A549 (cell line): ENCODE measurements at regions of chr17 and their contacts with region 1.

Region 1: GRCh38 chr17:78360371-78361224 is 721 bp upstream of the SOCS3 start:
- DNase-seq: peak; percentile 92 to 99
- ATAC-seq: peak; percentile 54 to 81
- H3K4me3 ChIP-seq: peak overlapping the region; percentile 86
- H3K27ac ChIP-seq: peak overlapping the region; percentile 93 to 96
- H3K4me1 ChIP-seq: peaks cover 35% of the 10 kb centered on the region
- CTCF ChIP-seq: peak; percentile 96
- EP300 ChIP-seq: peak in 1 of 2 experiments; percentile 3; a peak in 1 of 5 replicates
- POLR2A ChIP-seq: no peak
- RAD21 ChIP-seq: peak; percentile 90 to 96

Region 2: DNA sequence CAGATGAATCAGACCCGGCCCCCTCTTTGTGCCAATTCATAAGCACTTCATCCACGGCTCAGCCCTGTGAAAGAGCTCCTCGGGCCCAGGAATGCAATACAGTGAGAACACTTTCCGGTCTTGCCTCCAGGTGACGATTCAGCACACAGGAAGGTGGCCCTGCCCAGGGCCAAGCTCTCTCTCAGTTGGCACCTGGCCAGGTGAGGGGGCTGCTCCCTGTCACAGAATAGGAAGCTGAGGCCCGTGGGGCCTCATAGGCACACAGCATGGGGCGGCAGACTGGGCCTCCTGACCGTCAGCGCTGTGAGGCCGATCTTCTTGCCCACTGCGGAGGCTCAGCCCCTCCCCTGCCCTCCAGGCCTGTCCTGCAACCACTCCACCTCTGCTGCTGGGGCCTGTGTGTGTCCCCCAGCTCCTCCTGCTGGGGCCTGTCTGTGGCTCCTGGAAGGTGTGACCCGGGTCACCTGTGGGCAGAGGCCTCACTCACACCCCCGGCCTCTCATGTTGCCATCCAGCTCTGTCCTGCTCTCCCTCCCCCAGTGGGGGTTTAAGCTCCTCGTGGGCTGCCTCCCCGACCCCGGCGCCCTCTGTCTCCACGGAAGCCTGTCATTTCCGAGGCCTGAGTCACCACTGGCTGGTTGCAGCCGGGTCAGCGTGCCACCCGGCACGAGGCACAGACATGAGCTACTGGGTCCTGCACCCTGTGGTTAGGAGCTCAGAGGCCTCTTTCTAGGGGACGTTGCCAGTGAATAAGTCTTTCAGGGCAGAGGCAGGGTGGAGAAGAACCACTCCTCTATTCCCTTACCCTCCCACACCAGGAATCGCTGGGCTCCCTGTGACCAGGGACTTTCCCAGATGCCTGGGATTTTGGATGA is 1105.4 kb before region 1 on chr17:
- CTCF ChIA-PET with region 1: no interaction called
- POLR2A ChIA-PET with region 1: no interaction called
- DNase-seq: peak; percentile 87 to 93
- ATAC-seq: peak; percentile 82 to 86
- H3K4me3 ChIP-seq: no peak overlapping the region
- H3K27ac ChIP-seq: peak overlapping the region; percentile 80 to 88
- H3K4me1 ChIP-seq: peaks cover 36% of the 10 kb centered on the region
- CTCF ChIP-seq: no peak; the same call in 2 of the 3 replicates
- EP300 ChIP-seq: peak in 1 of 2 experiments; percentile 52; a peak in 1 of 5 replicates
- POLR2A ChIP-seq: no peak
- RAD21 ChIP-seq: peak in 1 of 2 experiments; percentile 34; a peak in 4 of 5 replicates

Region 3: GRCh38 chr17:78239489-78239931 is 121.1 kb before region 1 on chr17:
- CTCF ChIA-PET with region 1: no interaction called
- POLR2A ChIA-PET with region 1: no interaction called
- DNase-seq: no peak
- ATAC-seq: no peak
- H3K4me3 ChIP-seq: no peak overlapping the region
- H3K27ac ChIP-seq: no peak overlapping the region
- H3K4me1 ChIP-seq: no peaks in the 10 kb centered on the region
- CTCF ChIP-seq: no peak
- EP300 ChIP-seq: no peak
- POLR2A ChIP-seq: no peak
- RAD21 ChIP-seq: no peak

Region 4: DNA sequence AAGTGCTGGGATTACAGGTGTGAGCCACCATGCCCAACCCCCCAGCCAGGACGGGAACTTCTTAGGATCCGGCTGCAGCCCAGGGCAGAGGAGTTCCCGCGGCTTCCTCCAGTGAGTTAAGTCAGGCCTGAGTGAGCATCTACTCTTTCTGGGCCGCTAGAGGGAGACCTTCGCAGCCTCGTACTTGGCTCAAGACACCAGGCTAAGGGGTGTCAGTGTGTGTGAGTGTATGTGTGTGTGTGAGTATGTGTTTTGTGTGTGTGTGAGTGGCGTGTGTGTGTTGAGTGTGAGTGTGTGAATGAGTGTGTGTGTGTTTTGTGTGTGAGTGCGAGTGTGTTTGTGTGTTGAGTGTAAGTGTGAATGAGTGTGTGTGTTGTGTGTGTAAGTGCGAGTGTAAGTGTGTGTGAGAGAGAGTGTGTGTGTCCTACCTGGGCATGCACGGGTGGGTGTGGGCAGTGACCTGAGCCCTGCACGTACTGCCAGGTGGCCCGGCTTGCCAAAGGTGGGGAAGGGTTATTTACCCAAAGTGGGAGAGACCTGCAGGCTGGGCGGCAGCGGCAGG is 70.7 kb before region 1 on chr17:
- CTCF ChIA-PET with region 1: interaction called, 119 read pairs
- POLR2A ChIA-PET with region 1: interaction called, 5 read pairs
- DNase-seq: peak; percentile 85 to 94
- ATAC-seq: peak; percentile 96 to 98
- H3K4me3 ChIP-seq: no peak overlapping the region
- H3K27ac ChIP-seq: peak overlapping the region in 1 of 2 experiments; percentile 59; a peak in 2 of 6 replicates
- H3K4me1 ChIP-seq: peaks cover 4% of the 10 kb centered on the region; the same call in 2 of the 3 replicates
- CTCF ChIP-seq: peak; percentile 85
- EP300 ChIP-seq: no peak
- POLR2A ChIP-seq: no peak
- RAD21 ChIP-seq: peak; percentile 90 to 96

Region 5: GRCh38 chr17:78313735-78314648 is 46.6 kb before region 1 on chr17:
- CTCF ChIA-PET with region 1: interaction called, 132 read pairs
- POLR2A ChIA-PET with region 1: interaction called, 26 read pairs
- DNase-seq: peak; percentile 95 to 98
- ATAC-seq: peak; percentile 63 to 72
- H3K4me3 ChIP-seq: peak overlapping the region; percentile 42
- H3K27ac ChIP-seq: peak overlapping the region; percentile 94 to 95
- H3K4me1 ChIP-seq: peaks cover 57% of the 10 kb centered on the region
- CTCF ChIP-seq: no peak; the same call in 2 of the 3 replicates
- EP300 ChIP-seq: peak; percentile 31 to 57; a peak in 2 of 5 replicates
- POLR2A ChIP-seq: peak; percentile 64
- RAD21 ChIP-seq: peak in 1 of 2 experiments; percentile 50; a peak in 4 of 5 replicates

Region 6: DNA sequence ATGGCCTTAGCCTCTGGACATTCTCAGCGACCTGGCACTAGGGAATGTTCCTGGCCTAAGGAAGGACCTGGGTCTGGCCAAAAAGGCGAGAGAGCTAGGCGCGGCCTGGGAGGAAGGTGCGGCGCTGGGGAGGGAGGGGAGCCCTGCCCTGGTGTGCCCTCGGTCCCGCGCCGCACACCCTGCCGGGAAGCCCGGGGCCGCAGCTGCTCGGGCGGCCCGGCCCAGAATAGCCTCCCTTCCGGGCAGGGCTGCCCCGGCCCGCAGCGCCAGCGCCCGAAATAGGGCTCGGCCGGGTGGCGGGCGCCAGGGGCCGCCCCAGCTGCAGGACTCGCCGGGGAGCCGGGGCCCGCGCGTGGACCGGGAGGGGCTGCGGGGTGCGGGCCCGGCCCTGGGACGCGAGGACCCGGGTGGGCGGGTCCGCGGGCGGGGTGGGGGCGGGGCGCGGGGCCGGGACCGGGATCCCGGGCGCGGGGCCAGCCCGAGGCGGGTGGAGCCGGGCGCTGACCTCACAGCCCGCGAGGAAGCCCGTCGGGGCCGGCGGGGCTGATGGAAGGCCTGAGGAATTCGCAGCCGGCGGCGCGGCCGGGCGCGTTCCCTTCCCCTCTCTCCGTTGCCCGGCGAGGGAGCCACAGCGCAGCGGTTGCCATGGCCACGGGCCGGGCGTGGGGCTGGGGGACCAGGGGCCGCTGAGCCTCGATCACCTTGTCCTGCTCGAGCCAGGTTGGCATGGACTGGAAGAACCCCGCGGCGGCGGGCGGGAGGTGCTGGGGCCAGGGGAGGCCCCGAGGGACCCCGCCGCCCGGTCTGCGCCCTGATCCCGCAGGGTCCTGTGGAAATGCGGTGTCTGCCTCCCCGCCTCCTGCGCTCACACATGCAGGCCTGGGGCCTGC is 18.8 kb before region 1 on chr17:
- CTCF ChIA-PET with region 1: interaction called, 5 read pairs
- POLR2A ChIA-PET with region 1: interaction called, 28 read pairs
- DNase-seq: peak; percentile 77 to 83
- ATAC-seq: peak; percentile 58 to 61
- H3K4me3 ChIP-seq: peak overlapping the region; percentile 53
- H3K27ac ChIP-seq: peak overlapping the region; percentile 91 to 97
- H3K4me1 ChIP-seq: peaks cover 74% of the 10 kb centered on the region
- CTCF ChIP-seq: no peak; the same call in 2 of the 3 replicates
- EP300 ChIP-seq: no peak
- POLR2A ChIP-seq: peak; percentile 22; the same call in 1 of the 2 replicates
- RAD21 ChIP-seq: peak in 1 of 2 experiments; percentile 10; a peak in 1 of 5 replicates

Region 7: GRCh38 chr17:78383725-78384471 is 23.3 kb after region 1 on chr17:
- CTCF ChIA-PET with region 1: interaction called, 134 read pairs
- POLR2A ChIA-PET with region 1: no interaction called
- DNase-seq: no peak
- ATAC-seq: no peak
- H3K4me3 ChIP-seq: no peak overlapping the region
- H3K27ac ChIP-seq: no peak overlapping the region
- H3K4me1 ChIP-seq: peaks cover 22% of the 10 kb centered on the region
- CTCF ChIP-seq: no peak
- EP300 ChIP-seq: no peak
- POLR2A ChIP-seq: no peak
- RAD21 ChIP-seq: no peak

Region 8: DNA sequence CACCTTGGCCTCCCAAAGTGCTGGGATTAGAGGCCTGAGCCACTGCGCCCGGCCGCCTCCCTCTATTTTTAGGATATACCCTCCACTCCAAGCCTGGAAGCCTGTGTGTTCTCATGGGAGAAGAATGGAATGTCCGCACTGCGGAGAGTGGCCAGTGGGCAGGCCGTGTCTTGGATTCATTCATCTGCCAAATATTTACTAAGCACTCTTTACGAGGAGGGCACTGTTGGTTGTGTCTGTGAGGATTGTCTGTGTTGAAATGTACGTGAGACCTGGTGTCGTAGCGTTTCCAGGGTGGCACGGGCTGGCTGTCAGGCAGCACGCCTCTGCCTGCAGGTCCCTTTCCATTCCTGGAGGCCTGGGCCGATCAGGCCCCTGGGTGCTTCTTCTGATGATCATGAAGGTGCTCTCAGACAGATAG is 37.1 kb after region 1 on chr17:
- CTCF ChIA-PET with region 1: interaction called, 47 read pairs
- POLR2A ChIA-PET with region 1: interaction called, 3 read pairs
- DNase-seq: no peak
- ATAC-seq: no peak
- H3K4me3 ChIP-seq: no peak overlapping the region
- H3K27ac ChIP-seq: no peak overlapping the region
- H3K4me1 ChIP-seq: peaks cover 1% of the 10 kb centered on the region; the same call in 1 of the 3 replicates
- CTCF ChIP-seq: no peak
- EP300 ChIP-seq: no peak
- POLR2A ChIP-seq: no peak
- RAD21 ChIP-seq: no peak

Region 9: DNA sequence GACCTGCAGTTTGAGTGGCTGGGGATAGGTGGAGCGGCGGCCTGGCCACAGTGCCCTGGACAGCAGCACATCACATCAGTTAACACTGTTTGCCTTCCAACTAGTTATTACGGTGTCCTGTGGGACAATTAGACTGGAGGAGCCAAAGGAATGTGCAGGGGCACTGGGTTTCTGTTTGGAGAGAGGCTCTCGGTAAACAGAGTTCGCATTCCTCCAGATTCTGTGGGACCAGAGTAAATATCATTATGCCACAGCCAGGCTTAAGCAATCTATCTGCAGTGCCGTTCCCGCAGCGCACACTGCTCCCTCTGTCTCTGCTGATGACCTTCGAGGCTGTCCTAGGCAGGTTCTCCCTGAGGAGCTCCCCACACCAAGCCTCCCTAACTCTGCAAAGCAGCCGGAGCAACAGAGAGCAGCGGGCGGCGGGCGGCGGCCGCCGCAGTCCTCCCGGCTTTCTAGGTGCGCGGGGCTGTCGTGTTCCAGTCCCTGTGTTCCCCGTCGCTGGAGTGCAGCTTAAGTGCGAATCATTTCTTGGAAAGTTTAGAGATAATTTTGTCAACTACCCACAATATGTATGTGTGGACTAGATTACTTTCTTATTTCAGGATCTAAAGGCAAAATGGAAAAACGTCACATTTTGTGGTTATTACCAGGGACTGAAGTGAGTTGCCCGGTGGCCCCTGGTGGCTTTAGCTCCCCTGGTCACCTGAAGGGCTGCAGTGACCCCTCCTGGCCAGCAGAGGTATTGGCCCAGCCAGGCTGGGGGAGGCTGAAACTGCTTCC is 61.1 kb after region 1 on chr17:
- CTCF ChIA-PET with region 1: interaction called, 388 read pairs
- POLR2A ChIA-PET with region 1: interaction called, 24 read pairs
- DNase-seq: peak; percentile 91 to 95
- ATAC-seq: peak; percentile 79 to 87
- H3K4me3 ChIP-seq: no peak overlapping the region
- H3K27ac ChIP-seq: peak overlapping the region; percentile 61 to 78
- H3K4me1 ChIP-seq: peaks cover 38% of the 10 kb centered on the region
- CTCF ChIP-seq: peak; percentile 98
- EP300 ChIP-seq: peak in 1 of 2 experiments; percentile 63; a peak in 2 of 5 replicates
- POLR2A ChIP-seq: no peak
- RAD21 ChIP-seq: peak; percentile 95 to 99

Region 10: GRCh38 chr17:78923660-78924453 is 563.3 kb after region 1 on chr17:
- CTCF ChIA-PET with region 1: no interaction called
- POLR2A ChIA-PET with region 1: no interaction called
- DNase-seq: peak; percentile 62 to 93
- ATAC-seq: peak; percentile 36 to 76; a peak in 5 of 6 replicates
- H3K4me3 ChIP-seq: peak overlapping the region; percentile 86
- H3K27ac ChIP-seq: peak overlapping the region; percentile 97 to 99
- H3K4me1 ChIP-seq: peaks cover 52% of the 10 kb centered on the region
- CTCF ChIP-seq: no peak
- EP300 ChIP-seq: no peak
- POLR2A ChIP-seq: no peak
- RAD21 ChIP-seq: no peak